ENCODE measurements at regions of chr1 and their contacts with region 1.

Region 1: GRCh38 chr1:154338875-154339274 is 13.6 kb downstream of the ATP8B2 start:
- DNase-seq: no peak
- ATAC-seq: no peak
- H3K4me3 ChIP-seq: no peak overlapping the region
- H3K27ac ChIP-seq: no peak overlapping the region
- H3K4me1 ChIP-seq: peaks cover 4% of the 10 kb centered on the region
- H3K27me3 ChIP-seq: peaks cover 0 to 1% (median 0%) of the 10 kb centered on the region in 3 donors
- CTCF ChIP-seq: no peak

Region 2: DNA sequence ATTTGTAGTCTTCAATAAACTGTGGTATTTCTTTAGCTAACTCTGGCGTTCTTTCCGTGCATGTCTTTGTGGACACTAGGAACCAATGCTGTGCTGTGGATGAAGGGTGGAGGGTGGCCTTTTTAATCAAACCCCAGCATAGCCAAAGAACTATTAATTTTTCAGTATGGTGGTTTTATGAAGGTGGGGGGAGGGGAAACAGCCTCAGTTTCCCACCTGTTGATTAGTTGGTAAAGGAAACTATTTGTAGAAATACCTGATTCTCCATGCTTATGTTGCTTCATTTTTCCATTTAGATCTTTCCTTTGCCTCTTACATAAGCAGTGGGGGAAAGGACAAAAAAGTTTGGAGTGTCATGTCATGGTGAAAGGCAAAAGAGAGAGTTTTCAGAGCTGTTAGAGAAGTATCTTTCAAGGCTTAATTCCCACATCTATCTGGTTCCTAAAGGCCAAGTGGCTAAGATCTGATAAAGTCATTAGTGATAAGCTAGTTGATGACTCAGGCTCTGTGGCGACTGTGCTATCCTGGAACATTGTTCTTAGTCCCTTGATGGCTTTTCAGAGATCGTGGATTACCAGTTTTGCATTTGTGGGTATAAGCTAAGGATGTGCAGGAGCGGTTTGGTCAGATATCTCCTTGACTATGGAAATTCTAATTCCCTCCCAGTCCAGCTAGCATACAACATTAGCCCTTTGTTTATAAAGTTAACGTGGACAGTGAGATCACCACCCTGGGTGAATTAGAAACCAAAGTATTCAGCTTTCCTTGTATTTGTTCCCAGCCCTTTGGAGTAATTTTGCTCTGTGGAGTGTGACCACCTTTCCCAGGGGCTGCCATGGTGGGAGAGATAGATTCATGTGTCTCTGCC is 75.2 kb before region 1 on chr1:
- intact Hi-C with region 1: no loop called
- DNase-seq: no peak
- ATAC-seq: no peak
- H3K4me3 ChIP-seq: no peak overlapping the region
- H3K27ac ChIP-seq: no peak overlapping the region
- H3K4me1 ChIP-seq: no peaks in the 10 kb centered on the region
- H3K27me3 ChIP-seq: no peaks in the 10 kb centered on the region
- CTCF ChIP-seq: no peak

Region 3: DNA sequence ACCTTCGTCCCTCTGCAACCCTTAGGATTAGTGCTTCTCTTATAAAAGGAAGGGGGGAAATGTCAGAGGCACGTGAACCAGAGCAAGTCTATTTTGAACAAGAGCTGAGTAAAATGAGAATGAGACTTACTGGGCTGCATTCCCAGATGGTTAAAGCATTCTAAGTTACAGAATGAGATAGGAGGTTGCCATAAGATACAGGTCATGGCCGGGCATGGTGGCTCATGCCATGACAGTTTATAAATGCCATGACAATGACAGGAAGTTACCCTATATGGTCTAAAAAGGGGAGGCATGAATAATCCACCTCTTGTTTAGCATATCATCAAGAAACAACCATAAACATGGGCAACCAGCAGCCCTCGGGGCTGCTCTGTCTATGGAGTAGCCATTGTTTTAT is 20.5 kb before region 1 on chr1:
- intact Hi-C with region 1: loop called in 1 of 2 experiments (anchors 2 kb)
- DNase-seq: no peak
- ATAC-seq: no peak
- H3K4me3 ChIP-seq: no peak overlapping the region
- H3K27ac ChIP-seq: no peak overlapping the region
- H3K4me1 ChIP-seq: no peaks in the 10 kb centered on the region
- H3K27me3 ChIP-seq: peaks cover 0 to 12% (median 2%) of the 10 kb centered on the region in 3 donors
- CTCF ChIP-seq: no peak

Measured in psoas muscle (tissue), 8 donors.